RWPE1 (cell line): ENCODE measurements at regions of chr20 and their contacts with region 1.

Region 1: GRCh38 chr20:330233-331149 is 5.1 kb downstream of the SOX12 start:
- DNase-seq: peak; percentile 68
- H3K27ac ChIP-seq: peak overlapping the region; percentile 96
- CTCF ChIP-seq: peak; percentile 96

Region 2: DNA sequence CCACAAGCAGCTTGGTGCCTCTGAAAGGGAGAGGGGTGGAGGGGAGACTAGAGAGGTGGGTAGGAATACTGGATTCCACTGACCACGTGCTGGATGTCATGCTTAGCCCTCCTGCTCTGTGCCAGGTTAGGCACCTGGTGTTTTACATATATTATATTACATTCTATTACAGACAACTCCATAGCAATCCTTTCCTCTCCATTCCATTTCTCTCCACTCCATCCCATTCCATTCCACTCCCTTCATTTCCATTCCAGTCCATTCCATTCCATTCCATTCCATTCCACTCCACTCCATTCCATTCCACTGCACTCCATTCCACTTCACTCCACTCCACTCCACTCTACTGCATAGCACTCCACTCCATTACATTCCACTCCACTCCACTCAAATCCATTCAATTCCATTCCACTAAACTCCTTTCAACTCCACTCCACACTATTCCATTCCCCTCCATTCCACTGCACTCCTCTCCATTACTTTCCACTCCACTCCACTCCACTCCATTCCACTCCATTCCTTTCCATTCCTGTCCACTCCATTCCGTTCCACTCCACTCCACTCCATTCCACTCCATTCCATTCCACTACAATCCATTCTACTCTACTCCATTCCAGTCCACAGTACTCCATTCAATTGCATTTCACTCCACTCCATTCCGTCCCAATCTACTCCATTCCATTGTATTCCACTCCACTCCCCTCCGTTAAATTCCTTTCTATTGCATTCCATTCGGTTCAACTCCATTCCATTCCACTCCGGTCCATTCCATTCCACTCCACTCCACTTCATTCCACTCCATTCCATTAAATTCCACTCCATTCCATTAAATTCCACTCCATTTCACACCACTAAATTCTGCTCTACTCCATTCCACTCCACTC is 270.2 kb before region 1 on chr20:
- CTCF ChIA-PET with region 1: no interaction called
- POLR2A ChIA-PET with region 1: no interaction called
- DNase-seq: no peak
- H3K27ac ChIP-seq: no peak overlapping the region
- CTCF ChIP-seq: no peak

Region 3: GRCh38 chr20:266596-267562 is 63.6 kb before region 1 on chr20:
- CTCF ChIA-PET with region 1: interaction called, 13 read pairs
- POLR2A ChIA-PET with region 1: no interaction called
- DNase-seq: peak; percentile 82
- H3K27ac ChIP-seq: no peak overlapping the region
- CTCF ChIP-seq: peak; percentile 98

Region 4: DNA sequence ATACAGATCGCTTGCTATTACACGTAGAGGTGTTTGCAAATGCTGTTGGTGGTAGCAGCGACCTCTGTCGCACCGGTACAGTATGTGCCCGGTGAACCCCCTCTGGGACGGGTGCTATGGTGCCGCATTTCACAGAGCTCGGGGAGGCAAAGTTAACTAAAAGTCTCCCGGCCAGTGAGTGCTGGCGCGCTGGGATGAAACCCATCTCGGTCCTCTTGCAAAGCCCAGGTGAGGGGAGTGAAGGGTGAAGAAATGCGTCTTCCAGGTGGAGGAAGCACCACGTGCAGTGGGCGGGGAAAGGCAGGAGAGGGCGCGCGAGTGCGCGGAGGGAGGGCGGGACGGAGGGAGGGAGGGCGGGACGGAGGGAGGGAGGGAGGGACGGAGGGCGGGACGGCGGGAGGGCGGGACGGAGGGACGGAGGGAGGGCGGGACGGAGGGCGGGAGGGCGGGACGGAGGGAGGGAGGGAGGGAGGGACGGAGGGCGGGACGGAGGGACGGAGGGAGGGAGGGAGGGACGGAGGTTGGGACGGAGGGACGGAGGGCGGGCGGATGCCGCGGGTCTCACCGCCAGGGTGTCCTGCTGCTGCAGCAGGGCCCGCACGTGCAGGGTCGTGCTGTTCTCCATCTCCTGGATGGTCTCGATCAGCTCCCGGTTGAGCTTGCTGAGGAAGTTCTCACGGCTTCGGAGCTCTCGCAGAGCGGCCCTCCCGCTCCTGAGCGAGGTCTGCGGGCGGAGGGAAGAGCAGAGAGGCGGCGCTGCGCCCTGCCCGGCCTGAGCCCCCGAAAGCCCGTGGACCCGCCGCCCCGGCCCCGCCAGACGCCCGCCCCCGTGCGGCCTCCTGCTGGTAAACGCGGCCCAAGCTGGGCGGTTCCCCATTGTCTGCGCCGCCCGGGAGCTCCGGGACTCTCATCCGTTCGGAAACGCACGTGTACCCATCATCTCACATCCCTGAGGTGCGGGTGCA is 51.6 kb before region 1 on chr20:
- CTCF ChIA-PET with region 1: interaction called, 19 read pairs
- POLR2A ChIA-PET with region 1: no interaction called
- DNase-seq: peak; percentile 78
- H3K27ac ChIP-seq: peak overlapping the region; percentile 68
- CTCF ChIP-seq: peak; percentile 65

Region 5: GRCh38 chr20:341682-342081 is 11.2 kb after region 1 on chr20:
- CTCF ChIA-PET with region 1: interaction called, 13 read pairs
- POLR2A ChIA-PET with region 1: no interaction called
- DNase-seq: peak; percentile 85
- H3K27ac ChIP-seq: peak overlapping the region; percentile 52
- CTCF ChIP-seq: no peak